Right ventricle myocardium inferior (tissue), 1 donor: ENCODE measurements at regions of chr12 and their contacts with region 1.

Region 1: GRCh38 chr12:112382232-112382796 is at the start of gene HECTD4:
- DNase-seq: peak; percentile 99
- ATAC-seq: peak; percentile 99
- total RNA-seq, gene HECTD4: 22.6 TPM

Region 2: GRCh38 chr12:112125250-112125999 is 256.9 kb before region 1 on chr12 and contains the start of gene TRAFD1:
- intact Hi-C with region 1: loop called (anchors 10 kb)
- DNase-seq: peak; percentile 98
- ATAC-seq: peak; percentile 98
- total RNA-seq, gene TRAFD1: 20.7 TPM

Region 3: DNA sequence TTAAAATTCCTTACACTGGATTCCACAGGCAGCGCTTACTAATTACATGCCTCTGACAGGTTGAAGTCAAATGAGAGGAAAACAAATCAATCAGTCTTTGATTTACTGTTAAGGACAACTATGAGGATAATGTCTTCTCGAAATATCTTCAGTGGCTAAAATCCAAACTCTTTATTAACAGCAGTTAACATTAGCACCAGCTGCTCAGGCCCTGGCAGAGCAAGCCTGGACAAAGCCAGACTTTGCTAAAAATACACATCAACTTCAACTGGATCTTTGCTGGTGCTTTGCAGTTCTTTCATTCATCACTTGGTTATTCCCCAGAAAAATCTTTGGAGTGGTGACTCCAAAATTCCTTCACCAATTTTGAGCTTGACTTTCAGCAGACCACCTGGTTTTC is 98.8 kb before region 1 on chr12:
- intact Hi-C with region 1: loop called (anchors 10 kb)
- DNase-seq: no peak
- ATAC-seq: peak; percentile 70